ENCODE measurements at regions of chr2 and their contacts with region 1.

Region 1: GRCh38 chr2:127637725-127638252 is 8.2 kb upstream of the GPR17 start:
- DNase-seq: no peak
- H3K4me3 ChIP-seq: no peak overlapping the region
- H3K27ac ChIP-seq: peak overlapping the region; percentile 87 to 90
- H3K4me1 ChIP-seq: peaks cover 16 to 36% of the 10 kb centered on the region in 2 donors
- H3K27me3 ChIP-seq: no peaks in the 10 kb centered on the region
- CTCF ChIP-seq: no peak

Region 2: DNA sequence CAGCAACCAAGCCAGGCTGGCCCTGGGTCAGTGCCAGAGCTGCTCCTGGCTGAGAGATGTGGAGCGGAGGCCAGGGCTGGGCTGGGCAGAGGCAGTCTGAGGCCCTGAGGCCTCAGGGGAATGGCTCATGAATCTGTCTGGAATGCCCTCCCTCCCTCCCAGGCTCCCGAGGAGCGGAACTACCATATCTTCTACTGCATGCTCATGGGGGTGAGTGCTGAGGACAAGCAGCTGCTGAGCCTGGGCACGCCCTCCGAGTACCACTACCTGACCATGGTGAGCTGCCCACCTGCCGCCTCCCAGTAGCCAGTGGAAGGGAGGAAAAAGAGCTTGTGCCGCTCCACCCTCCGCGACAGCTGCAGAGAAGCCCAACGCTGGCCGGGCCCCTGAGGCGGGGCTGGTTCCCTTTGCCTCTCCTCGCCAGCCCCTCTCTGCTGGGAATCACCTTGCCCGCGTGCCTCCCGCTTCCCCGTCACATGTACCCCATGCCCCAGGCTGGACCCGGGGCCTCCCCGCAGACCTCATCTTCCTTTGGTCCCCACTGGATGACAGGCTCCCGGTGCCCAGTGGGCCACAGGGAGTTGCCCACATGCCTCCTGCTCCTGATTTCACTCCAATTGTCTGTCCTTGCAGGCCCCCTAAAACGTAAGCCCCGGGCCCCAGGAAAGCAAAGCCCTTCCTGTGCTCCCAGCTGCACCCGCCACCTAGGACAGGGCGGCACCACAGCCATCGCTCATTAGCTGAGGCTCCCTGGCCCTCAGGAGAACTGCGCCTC is 61.2 kb before region 1 on chr2:
- intact Hi-C with region 1: loop called (anchors 5 kb)
- DNase-seq: peak in 1 of 2 donors; percentile 93
- H3K4me3 ChIP-seq: peak overlapping the region in 1 of 2 donors; percentile 11
- H3K27ac ChIP-seq: peak overlapping the region; percentile 27 to 49
- H3K4me1 ChIP-seq: peaks cover 6 to 14% of the 10 kb centered on the region in 2 donors
- H3K27me3 ChIP-seq: no peaks in the 10 kb centered on the region
- CTCF ChIP-seq: no peak

Region 3: DNA sequence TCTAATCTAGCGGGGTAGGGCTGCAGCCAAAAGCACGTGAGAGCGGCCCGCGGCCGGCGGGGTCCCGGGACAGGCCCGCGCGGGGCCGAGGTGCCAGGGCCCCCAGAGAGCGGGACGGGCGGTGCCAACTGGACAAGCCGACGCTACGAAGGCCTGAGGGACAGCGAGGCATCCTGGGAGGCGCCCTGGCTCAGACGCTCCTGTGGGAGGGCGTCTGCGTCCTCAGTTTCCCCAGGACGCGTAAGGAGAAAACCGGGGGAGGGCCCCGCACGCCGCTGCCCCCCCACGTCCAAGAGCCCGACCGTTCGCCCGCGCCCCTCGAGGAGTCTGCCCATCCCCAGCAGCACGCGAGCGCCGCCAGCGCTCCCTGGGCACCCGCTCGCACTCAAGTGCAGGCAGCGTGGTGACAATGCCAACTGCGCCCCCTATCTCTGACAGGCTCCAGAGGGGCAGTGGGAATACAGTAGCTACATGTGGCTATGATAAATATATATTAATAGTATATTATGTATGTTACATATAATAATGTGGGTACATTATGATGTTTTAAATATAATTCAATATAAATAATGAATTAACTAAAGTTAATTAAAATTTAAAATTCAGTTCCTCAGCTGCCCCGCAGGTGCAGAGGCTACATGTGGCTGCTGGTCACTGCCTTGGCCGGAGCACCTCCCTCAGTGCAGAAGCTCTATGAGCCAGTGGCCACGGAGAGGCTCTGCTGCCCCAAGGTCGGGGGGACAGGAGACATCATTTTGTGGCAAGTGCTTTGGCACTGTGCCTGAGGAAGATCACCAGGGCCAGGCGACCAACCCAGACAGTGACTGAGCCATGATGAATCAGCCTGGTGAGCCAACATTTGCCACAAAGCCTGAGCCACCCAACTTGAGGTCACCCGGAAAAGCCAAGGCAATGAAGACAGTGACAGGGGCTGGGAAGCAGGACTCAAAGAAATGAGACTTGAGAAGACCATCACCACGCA is 58.0 kb after region 1 on chr2:
- intact Hi-C with region 1: loop called (anchors 2 kb)
- DNase-seq: peak in 1 of 2 donors; percentile 85
- H3K4me3 ChIP-seq: peak overlapping the region; percentile 23 to 63
- H3K27ac ChIP-seq: peak overlapping the region; percentile 67 to 93
- H3K4me1 ChIP-seq: peaks cover 0 to 6% of the 10 kb centered on the region in 2 donors
- H3K27me3 ChIP-seq: no peaks in the 10 kb centered on the region
- CTCF ChIP-seq: peak; percentile 49 to 83 (median 66)

Region 4: GRCh38 chr2:127820080-127820668 is 182.4 kb after region 1 on chr2:
- intact Hi-C with region 1: no loop called
- DNase-seq: no peak
- H3K4me3 ChIP-seq: no peak overlapping the region
- H3K27ac ChIP-seq: no peak overlapping the region
- H3K4me1 ChIP-seq: no peaks in the 10 kb centered on the region
- H3K27me3 ChIP-seq: no peaks in the 10 kb centered on the region
- CTCF ChIP-seq: no peak